A673 (cell line): ENCODE measurements at regions of chr13 and their contacts with region 1.

Region 1: DNA sequence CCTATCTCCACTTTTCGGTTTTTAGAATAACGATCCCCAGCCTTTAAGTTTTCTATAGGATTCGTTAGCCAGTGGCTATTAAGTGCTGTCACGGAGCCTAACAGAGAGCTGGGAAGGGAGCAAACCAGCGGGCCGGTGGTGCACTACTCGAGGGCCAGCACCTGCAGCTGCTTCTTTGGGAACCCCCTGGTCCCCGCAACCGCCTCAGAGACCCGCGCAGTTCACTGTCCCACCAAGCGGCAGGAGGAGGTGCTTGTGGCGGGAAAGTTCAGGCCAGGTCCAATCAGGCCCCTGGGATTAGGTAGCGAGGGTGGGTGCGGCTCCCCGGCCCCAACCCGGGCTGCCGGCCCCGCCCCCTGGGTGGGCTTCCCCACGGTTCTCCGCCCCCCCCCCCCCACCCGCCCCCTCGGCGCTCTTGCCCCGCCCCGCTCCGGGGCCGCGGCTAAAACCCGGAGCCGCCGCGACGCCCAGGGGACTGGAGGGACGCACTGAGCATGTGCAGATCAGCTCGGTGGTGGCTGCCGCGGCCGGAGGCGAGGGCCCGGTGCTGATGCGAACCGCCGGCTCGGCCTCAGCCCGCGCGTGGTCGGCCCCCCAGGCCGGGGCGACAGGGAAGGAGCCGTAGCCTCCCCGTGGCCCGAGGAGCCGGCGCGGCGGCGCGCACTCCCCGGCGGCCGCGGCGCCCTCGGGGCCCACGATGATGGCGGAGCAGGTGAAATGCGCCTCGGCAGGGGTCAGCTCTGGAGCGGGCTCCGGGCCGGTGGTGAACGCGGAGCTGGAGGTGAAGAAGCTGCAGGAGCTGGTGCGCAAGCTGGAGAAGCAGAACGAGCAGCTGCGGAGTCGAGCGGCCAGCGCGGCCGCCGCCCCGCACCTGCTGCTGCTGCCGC is at the start of gene SLAIN1:
- DNase-seq: peak; percentile 95
- H3K4me3 ChIP-seq: peak within 1 kb of the TSS; percentile 83
- H3K27ac ChIP-seq: peak within 1 kb of the TSS; percentile 98
- H3K4me1 ChIP-seq: peaks cover 47% of the 10 kb centered on the region
- H3K27me3 ChIP-seq: no peaks in the 10 kb centered on the region
- CTCF ChIP-seq: no peak
- total RNA-seq, gene SLAIN1: 267 and 314 TPM in 2 replicates

Region 2: DNA sequence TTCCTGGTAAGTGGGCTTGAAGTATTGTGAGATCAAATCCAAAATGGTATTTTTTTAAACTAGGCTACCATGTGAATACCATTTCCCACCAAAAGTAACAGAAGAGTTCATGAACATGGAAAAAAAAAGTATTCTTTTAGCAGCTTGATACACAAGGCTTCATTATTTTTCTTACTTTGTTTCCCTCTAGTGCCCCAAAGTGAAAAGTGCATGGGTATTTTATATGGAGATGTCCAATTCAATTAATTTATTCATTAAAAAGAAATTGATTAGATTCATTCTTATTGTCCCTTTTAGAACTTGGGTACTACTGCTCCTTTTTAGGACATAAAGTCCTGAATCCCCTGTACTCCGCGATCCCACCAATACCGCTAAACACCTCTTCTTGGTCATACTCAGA is 190.6 kb before region 1 on chr13:
- CTCF ChIA-PET with region 1: no interaction called
- POLR2A ChIA-PET with region 1: no interaction called
- intact Hi-C with region 1: loop called (anchors 2 kb)
- DNase-seq: peak; percentile 49
- H3K4me3 ChIP-seq: no peak overlapping the region
- H3K27ac ChIP-seq: no peak overlapping the region
- H3K4me1 ChIP-seq: peaks cover 35% of the 10 kb centered on the region
- H3K27me3 ChIP-seq: peaks cover 16% of the 10 kb centered on the region
- CTCF ChIP-seq: peak; percentile 56

Region 3: GRCh38 chr13:77599351-77599750 is 98.1 kb before region 1 on chr13:
- CTCF ChIA-PET with region 1: interaction called, 3 read pairs
- POLR2A ChIA-PET with region 1: no interaction called
- intact Hi-C with region 1: loop called (anchors 1 kb)
- DNase-seq: peak; percentile 27
- H3K4me3 ChIP-seq: no peak overlapping the region
- H3K27ac ChIP-seq: no peak overlapping the region
- H3K4me1 ChIP-seq: peaks cover 22% of the 10 kb centered on the region
- H3K27me3 ChIP-seq: no peaks in the 10 kb centered on the region
- CTCF ChIP-seq: no peak

Region 4: DNA sequence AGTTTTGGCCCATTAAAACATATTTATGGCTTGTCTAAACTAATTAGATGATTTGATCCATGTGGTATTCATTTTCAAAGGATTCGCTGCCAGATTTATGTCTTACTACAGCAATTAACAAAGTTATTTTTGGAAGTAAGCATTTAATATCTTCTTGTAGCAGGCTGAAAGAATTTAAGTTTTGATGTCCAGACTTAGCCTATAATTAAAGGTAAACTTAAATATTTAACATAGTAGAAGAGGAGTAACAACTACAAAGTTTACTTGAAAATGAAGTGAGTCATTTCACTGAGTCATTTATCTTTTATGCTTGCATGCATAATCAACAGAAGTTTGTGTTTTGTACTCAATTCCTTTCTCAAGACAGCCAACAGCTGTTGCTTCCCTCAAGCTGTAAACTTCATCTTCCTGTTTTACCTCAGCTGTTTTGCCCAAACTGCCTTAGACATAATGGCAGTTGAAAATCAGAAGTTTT is 163.1 kb after region 1 on chr13:
- CTCF ChIA-PET with region 1: no interaction called
- POLR2A ChIA-PET with region 1: no interaction called
- intact Hi-C with region 1: loop called (anchors 2 kb)
- DNase-seq: peak; percentile 87
- H3K4me3 ChIP-seq: no peak overlapping the region
- H3K27ac ChIP-seq: peak overlapping the region; percentile 6
- H3K4me1 ChIP-seq: peaks cover 54% of the 10 kb centered on the region
- H3K27me3 ChIP-seq: no peaks in the 10 kb centered on the region
- CTCF ChIP-seq: no peak

Region 5: DNA sequence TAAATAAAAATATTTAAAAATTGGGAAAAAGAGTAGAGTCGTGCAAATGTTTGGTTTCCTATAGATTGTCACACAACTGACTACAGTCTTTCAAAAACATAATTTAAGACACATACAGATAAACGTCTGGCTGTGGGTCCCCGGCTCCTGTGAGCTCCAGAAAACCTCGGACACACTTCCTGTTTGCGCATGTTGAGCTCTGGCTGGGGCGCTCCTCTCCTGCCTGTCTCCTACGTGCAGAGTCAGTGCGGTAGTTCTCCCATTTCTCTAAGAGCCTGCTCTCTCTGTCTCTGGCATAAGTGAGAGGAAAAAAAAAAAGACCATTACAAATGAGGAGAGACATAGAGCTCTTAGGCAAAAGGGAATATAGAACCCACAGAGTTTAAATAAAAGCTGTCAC is 1089.7 kb after region 1 on chr13:
- CTCF ChIA-PET with region 1: no interaction called
- POLR2A ChIA-PET with region 1: interaction called, 3 read pairs
- intact Hi-C with region 1: loop called (anchors 5 kb)
- DNase-seq: peak; percentile 69
- H3K4me3 ChIP-seq: no peak overlapping the region
- H3K27ac ChIP-seq: peak overlapping the region; percentile 92
- H3K4me1 ChIP-seq: peaks cover 69% of the 10 kb centered on the region
- H3K27me3 ChIP-seq: peaks cover 24% of the 10 kb centered on the region
- CTCF ChIP-seq: no peak